ENCODE measurements at regions of chr1 and their contacts with region 1.

Region 1: GRCh38 chr1:999725-1000356 is at the start of gene HES4:
- DNase-seq: peak; percentile 45
- H3K4me3 Mint-ChIP-seq: peak within 1 kb of the TSS; percentile 66
- H3K27ac Mint-ChIP-seq: peak within 1 kb of the TSS; percentile 78
- H3K4me1 Mint-ChIP-seq: peaks cover 5% of the 10 kb centered on the region
- H3K27me3 Mint-ChIP-seq: peaks cover 33% of the 10 kb centered on the region
- total RNA-seq, gene HES4: 1.8 and 2.9 TPM in 2 replicates

Region 2: DNA sequence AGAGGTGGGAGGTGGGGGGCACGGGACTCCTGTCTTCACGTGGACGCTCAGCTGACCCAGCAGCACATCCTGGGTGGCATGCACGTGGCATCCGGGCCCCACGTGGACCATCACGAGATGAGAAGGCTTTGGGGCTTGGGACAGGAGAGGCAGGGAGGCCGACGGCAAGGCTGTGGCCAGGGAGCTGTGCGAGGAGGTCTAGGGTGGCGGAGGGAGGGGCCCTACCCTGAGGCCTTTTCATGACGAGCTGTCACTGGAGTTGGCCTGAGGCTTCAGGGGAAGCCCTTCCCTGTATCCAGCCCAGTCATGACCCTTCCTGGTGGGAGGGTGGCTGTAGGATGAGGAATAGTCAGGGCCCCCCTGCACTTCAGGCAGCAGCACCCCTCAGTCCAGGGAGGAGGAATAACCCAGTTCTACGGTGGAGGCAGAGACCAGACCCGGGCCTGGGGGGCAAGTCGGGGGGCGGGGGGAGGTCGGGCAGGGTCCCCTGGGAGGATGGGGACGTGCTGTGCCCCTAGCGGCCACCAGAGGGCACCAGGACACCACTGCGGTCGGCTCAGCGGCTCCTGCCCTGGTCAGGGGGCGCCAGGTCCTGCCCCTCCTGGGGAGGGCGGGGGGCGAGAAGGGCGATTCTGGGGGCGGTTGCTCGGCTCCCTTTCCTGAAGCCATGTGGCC is 15.9 kb before region 1 on chr1:
- intact Hi-C with region 1: loop called (anchors 2 kb)
- DNase-seq: peak; percentile 43
- H3K4me3 Mint-ChIP-seq: no peak overlapping the region
- H3K27ac Mint-ChIP-seq: no peak overlapping the region
- H3K4me1 Mint-ChIP-seq: no peaks in the 10 kb centered on the region
- H3K27me3 Mint-ChIP-seq: peaks cover 19% of the 10 kb centered on the region

Region 3: DNA sequence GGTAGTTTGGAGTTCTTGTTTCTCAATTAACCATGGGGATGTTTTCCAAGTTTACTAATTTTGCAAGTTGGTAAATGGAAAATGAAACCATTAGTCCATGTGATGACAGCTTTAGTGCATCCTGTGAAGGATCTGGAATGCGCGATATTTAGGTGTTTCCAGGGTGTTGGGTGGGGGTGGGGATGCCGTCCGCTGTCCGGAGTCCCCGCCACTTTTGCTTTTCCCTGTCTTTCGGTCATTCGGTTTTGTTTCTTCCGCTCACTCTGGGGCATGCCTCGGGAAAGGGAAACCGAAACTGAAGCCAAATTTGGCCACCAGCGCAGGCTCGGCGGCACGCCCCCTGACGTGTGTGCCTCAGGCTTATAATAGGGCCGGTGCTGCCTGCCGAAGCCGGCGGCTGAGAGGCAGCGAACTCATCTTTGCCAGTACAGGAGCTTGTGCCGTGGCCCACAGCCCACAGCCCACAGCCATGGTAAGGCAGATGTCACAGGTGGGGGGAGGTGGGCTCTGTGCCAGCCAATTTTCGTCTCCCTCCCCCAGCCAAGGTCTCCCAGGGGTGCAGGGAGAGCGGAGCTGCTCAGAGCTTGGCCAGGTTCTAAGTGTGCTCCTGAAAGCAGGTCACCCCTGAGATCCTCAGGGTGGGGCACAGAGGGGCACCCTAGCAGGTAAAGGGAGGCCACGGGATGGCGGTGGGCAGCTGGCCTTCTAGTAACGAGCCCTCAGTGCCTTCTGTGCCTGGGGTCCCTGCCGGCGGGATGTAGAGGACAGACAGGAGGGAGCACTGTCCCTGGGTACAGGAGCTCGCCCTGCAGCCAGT is 13.5 kb after region 1 on chr1 and contains the start of gene ISG15:
- intact Hi-C with region 1: loop called (anchors 1 kb)
- DNase-seq: peak; percentile 89
- H3K4me3 Mint-ChIP-seq: peak within 1 kb of the TSS; percentile 89
- H3K27ac Mint-ChIP-seq: peak within 1 kb of the TSS; percentile 96
- H3K4me1 Mint-ChIP-seq: peaks cover 37% of the 10 kb centered on the region
- H3K27me3 Mint-ChIP-seq: peaks cover 5% of the 10 kb centered on the region
- total RNA-seq, gene ISG15: 52.9 and 53.7 TPM in 2 replicates

Region 4: DNA sequence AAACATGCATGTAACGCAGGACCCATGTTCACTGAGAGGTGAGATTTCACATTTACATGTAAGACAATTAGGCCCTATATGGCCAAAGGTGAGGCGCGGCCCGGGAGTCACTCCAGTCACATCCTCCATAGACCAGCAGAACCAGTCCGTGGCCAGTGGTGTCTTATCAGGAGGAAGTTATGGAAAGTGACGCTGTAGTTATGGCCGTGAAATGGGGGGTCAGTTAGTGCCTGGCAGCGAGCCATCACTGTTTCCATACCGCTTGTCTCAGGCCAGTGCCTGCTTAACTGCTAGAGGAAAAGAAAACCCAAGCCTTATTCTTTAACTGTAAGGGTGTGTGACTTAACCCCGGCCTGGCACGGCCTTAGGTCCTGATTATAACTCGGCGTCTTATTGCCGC is 109.9 kb after region 1 on chr1:
- intact Hi-C with region 1: no loop called
- DNase-seq: no peak
- H3K4me3 Mint-ChIP-seq: no peak overlapping the region
- H3K27ac Mint-ChIP-seq: no peak overlapping the region
- H3K4me1 Mint-ChIP-seq: peaks cover 5% of the 10 kb centered on the region
- H3K27me3 Mint-ChIP-seq: no peaks in the 10 kb centered on the region